MCF 10A (cell line): ENCODE measurements at regions of chr18 and their contacts with region 1.

Region 1: DNA sequence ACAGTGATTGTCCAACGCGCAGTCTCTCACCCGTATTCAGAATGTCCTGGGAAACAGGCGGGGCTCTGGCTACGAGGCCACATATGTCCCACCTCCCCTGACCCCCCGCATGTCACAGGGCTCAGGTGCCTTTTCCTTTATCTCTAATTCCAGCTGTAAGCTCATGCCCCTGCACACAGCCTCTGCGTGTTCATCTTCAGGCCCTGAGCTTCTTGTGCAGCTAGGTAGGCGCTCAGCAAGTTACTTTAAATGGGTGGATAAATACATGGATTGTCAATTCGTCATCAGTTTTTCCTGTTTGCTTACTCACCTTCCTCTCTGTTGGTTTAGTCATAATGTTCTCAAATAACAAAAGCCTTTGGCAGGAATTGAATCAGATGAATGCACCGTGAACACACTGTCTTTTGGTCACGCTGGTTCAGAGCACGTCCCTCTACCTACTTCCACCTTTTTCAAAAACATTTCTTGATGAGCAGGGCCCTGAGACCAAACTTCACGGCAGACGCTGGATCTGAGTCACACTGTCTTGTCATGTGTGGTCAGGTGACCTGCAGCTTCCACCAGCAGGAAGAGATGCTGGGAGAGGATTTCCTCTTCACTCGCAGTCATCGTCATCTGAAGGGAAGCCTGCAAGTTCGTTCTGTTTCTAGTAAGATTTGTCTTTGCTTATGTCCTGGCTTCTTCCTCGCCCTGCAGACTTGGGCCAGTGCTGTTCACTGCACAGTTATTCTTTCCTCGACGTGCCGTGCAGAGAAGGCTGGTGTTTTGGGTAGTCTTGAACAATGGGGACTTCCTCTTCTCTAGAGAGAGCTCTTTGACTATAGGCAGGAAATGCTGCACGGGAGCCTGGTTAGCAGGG is 138.1 kb downstream of the PTGR3 start:
- DNase-seq: peak; percentile 86
- H3K4me3 Mint-ChIP-seq: peak overlapping the region; percentile 59
- H3K27ac Mint-ChIP-seq: peak overlapping the region; percentile 93
- H3K4me1 Mint-ChIP-seq: peaks cover 11% of the 10 kb centered on the region
- H3K27me3 Mint-ChIP-seq: no peaks in the 10 kb centered on the region
- CTCF ChIP-seq: no peak

Region 2: GRCh38 chr18:75247611-75248421 is 177.0 kb after region 1 on chr18:
- CTCF ChIA-PET with region 1: no interaction called
- POLR2A ChIA-PET with region 1: no interaction called
- intact Hi-C with region 1: loop called (anchors 1 kb)
- DNase-seq: peak; percentile 50
- H3K4me3 Mint-ChIP-seq: peak overlapping the region; percentile 80
- H3K27ac Mint-ChIP-seq: peak overlapping the region; percentile 95
- H3K4me1 Mint-ChIP-seq: peaks cover 34% of the 10 kb centered on the region
- H3K27me3 Mint-ChIP-seq: no peaks in the 10 kb centered on the region
- CTCF ChIP-seq: no peak